ENCODE measurements at regions of chr2 and their contacts with region 1.

Region 1: DNA sequence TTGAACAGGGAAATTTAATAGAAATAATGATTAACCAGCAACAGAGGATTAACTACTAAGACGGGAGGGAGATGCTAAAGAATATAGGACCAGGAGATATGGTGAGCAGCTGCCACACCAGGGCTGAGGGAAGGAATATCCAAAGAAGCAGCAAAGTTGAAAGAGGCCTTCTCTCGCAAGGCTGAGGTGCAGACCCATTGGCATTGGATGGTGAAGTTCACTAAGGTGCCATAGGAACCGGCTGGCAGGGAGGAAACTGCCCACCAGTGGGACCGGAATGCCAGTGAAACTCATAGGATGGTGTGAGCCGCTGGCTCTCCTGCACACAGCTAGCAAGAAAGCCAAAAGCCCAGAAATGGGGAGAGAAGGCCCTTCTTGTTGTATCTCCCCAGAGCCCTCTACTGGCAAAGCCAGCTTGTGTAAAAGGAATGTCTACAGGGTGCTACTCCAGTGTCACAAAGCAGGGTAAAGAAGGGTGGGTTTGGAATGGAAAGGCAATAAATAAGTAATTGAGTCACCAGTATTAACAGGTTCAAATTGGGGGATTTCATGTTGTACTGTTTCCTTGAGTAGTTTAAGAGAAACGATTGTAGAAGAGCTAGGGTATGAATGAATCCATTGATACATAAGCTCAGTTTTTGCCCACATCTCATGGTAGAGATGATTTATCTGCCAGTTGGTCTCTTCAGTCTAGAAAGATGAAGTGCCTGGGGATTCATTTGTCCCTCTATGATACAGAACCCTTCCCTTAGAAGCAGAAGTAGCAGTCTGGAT is 36.0 kb downstream of the FARP2 start:
- DNase-seq: peak; percentile 49
- CTCF ChIP-seq: peak; percentile 57

Region 2: GRCh38 chr2:240913810-240914644 is 478.1 kb before region 1 on chr2:
- CTCF ChIA-PET with region 1: no interaction called
- POLR2A ChIA-PET with region 1: no interaction called
- DNase-seq: peak; percentile 79
- CTCF ChIP-seq: peak; percentile 90

Region 3: GRCh38 chr2:241248897-241249296 is 143.2 kb before region 1 on chr2:
- CTCF ChIA-PET with region 1: no interaction called
- POLR2A ChIA-PET with region 1: no interaction called
- DNase-seq: no peak
- CTCF ChIP-seq: no peak

Region 4: GRCh38 chr2:241358470-241358869 is 33.6 kb before region 1 on chr2:
- CTCF ChIA-PET with region 1: interaction called, 19 read pairs
- POLR2A ChIA-PET with region 1: no interaction called
- DNase-seq: peak; percentile 65
- CTCF ChIP-seq: no peak

Region 5: DNA sequence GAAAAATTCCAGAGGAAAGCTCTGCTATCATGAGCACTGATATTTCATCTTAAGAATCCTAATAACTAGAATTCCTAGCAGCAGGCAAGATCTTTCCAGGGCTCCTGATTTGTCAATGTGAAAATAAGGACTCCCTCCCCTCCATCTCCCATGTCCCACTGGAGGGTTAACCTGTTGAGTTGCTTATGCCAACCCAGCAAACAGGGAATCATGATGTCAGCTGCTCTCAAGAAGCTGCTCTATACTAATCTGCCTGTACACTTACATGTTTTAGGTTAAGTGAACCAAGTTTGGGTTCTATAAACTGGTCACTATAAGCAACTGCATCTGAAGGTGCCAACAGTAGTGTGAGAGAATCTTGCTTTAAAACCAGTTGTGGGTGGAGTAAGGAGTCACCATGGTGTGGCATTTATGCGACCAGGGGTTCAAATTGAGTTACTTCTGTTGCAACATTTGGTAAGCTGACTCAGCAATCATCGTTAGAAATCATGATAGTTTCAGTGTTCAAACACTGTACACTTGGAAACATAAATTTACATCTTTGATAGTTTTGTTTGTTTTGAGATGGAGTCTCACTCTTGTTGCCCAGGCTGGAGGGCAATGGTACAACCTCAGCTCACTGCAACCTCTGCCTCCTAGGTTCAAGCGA is 62.9 kb after region 1 on chr2:
- CTCF ChIA-PET with region 1: no interaction called
- POLR2A ChIA-PET with region 1: no interaction called
- DNase-seq: no peak
- CTCF ChIP-seq: no peak